ENCODE measurements at regions of chr3 and their contacts with region 1.

Region 1: DNA sequence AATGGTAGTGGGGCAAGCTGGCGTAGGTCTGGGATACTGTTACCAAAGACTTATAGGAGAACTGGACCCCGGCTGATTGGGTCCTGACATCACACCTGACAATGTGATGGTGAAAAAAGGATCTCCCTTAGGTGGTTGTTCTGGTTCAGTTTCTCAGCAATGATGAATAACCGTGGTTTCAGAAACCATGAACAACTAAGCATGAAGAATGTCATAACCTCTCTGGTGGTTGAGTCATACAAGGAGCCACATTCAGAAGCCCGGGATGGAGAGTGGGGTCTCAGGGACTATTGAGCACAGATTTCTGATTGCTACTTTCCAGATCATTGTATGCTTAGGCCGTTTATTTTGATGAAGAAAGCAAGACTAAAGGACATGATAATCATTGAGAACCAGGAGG is 17.4 kb downstream of the GPR160 start:
- DNase-seq: no peak
- H3K4me3 Mint-ChIP-seq: no peak overlapping the region
- H3K27ac Mint-ChIP-seq: no peak overlapping the region
- H3K4me1 Mint-ChIP-seq: peaks cover 45% of the 10 kb centered on the region
- H3K27me3 Mint-ChIP-seq: no peaks in the 10 kb centered on the region

Region 2: DNA sequence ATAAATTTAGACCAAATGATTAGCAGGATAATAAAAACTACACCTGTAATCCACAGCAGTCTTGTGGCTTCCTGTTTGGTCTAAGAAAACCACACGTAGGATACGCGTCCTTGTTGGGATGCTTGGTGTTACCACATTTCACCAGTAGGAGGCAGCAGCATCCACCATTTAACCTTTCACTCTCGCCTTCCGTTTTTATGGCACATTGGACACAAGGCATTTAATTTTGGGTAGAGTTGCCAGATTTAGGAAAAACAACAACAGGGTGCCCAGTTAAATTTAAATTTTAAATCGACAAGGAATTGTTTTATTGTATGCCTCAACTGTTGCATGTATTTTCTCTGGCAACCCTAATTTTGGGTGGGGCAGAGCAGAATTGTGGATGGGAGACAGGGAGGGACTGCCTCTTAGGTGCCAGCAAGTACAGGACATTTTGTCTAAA is 191.7 kb before region 1 on chr3:
- CTCF ChIA-PET with region 1: interaction called, 12 read pairs
- POLR2A ChIA-PET with region 1: no interaction called
- DNase-seq: peak; percentile 72
- H3K4me3 Mint-ChIP-seq: no peak overlapping the region
- H3K27ac Mint-ChIP-seq: no peak overlapping the region
- H3K4me1 Mint-ChIP-seq: peaks cover 21% of the 10 kb centered on the region
- H3K27me3 Mint-ChIP-seq: peaks cover 16% of the 10 kb centered on the region

Region 3: GRCh38 chr3:170033489-170033888 is 21.7 kb before region 1 on chr3:
- CTCF ChIA-PET with region 1: interaction called, 15 read pairs
- POLR2A ChIA-PET with region 1: interaction called, 3 read pairs
- DNase-seq: peak; percentile 71
- H3K4me3 Mint-ChIP-seq: no peak overlapping the region
- H3K27ac Mint-ChIP-seq: peak overlapping the region; percentile 49
- H3K4me1 Mint-ChIP-seq: peaks cover 34% of the 10 kb centered on the region
- H3K27me3 Mint-ChIP-seq: no peaks in the 10 kb centered on the region

Measured in activated CD4-positive, alpha-beta memory T cell treated with anti-CD3 and anti-CD28 coated beads, Interleukin-2, amount 10 ng/mL, durations not matched to agents 7 days and 5 days (primary cell).